ENCODE measurements at regions of chr2 and their contacts with region 1.

Region 1: GRCh38 chr2:196195302-196195701 is 23.9 kb upstream of the STK17B start:
- DNase-seq: no peak
- H3K4me3 Mint-ChIP-seq: no peak overlapping the region
- H3K27ac Mint-ChIP-seq: no peak overlapping the region
- H3K4me1 Mint-ChIP-seq: peaks cover 48% of the 10 kb centered on the region
- H3K27me3 Mint-ChIP-seq: no peaks in the 10 kb centered on the region

Region 2: GRCh38 chr2:196183528-196184231 is 11.6 kb before region 1 on chr2:
- CTCF ChIA-PET with region 1: interaction called, 22 read pairs
- POLR2A ChIA-PET with region 1: interaction called, 4 read pairs
- DNase-seq: no peak
- H3K4me3 Mint-ChIP-seq: peak overlapping the region; percentile 55
- H3K27ac Mint-ChIP-seq: peak overlapping the region; percentile 95
- H3K4me1 Mint-ChIP-seq: peaks cover 73% of the 10 kb centered on the region
- H3K27me3 Mint-ChIP-seq: no peaks in the 10 kb centered on the region

Region 3: DNA sequence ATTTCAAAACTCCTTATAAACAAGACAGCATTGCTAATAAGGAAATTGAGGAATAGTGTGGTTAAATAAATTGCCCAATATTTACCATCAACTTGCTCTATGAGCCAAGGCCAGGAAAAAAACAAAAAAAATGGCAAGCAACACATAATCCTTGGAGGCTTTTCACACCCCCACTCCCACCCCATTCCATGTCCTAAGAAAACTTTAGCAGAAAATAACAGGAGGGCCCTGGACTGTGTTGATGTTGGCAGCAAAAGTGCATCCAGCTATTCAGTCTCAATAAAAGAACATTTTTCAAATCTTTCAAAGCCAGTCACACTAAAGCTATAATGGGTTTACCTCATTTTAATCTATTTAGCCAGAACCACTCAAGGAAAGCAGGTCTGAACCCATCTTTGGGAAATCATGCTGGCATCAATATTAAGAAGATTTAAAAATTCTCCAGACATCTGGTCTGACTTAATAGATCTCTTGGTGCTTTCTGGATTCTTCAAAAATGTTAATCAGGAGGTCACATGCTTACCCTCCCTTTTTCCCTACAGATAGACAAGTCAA is 10.7 kb after region 1 on chr2:
- CTCF ChIA-PET with region 1: interaction called, 10 read pairs
- POLR2A ChIA-PET with region 1: no interaction called
- DNase-seq: no peak
- H3K4me3 Mint-ChIP-seq: no peak overlapping the region
- H3K27ac Mint-ChIP-seq: no peak overlapping the region
- H3K4me1 Mint-ChIP-seq: peaks cover 54% of the 10 kb centered on the region
- H3K27me3 Mint-ChIP-seq: no peaks in the 10 kb centered on the region